Naive thymus-derived CD4-positive, alpha-beta T cell (primary cell): ENCODE measurements at regions of chr7 and their contacts with region 1.

Region 1: GRCh38 chr7:111561885-111562732 is at the start of gene IMMP2L:
- DNase-seq: peak; percentile 80 to 97 (median 90)
- ATAC-seq: peak; percentile 98
- H3K4me3 ChIP-seq: peak within 1 kb of the TSS; percentile 57
- H3K4me3 Mint-ChIP-seq: peak within 1 kb of the TSS; percentile 86 to 94 (median 92)
- H3K27ac ChIP-seq: peak within 1 kb of the TSS; percentile 94
- H3K27ac Mint-ChIP-seq: peak within 1 kb of the TSS; percentile 81 to 98 (median 95)
- H3K4me1 ChIP-seq: peaks cover 13 to 15% of the 10 kb centered on the region in 2 donors
- H3K4me1 Mint-ChIP-seq: peaks cover 25 to 58% (median 46%) of the 10 kb centered on the region in 7 donors
- H3K27me3 ChIP-seq: no peaks in the 10 kb centered on the region
- H3K27me3 Mint-ChIP-seq: peaks cover 2 to 12% (median 5%) of the 10 kb centered on the region in 5 donors
- total RNA-seq, gene IMMP2L: 9.7 to 20.8 (median 16.5) TPM

Region 2: GRCh38 chr7:111012799-111013675 is 549.1 kb before region 1 on chr7:
- CTCF ChIA-PET with region 1: no interaction called
- POLR2A ChIA-PET with region 1: no interaction called
- intact Hi-C with region 1: loop called in 1 of 2 experiments (anchors 10 kb)
- DNase-seq: peak in 8 of 9 donors; percentile 44 to 76 (median 70)
- ATAC-seq: peak; percentile 86
- H3K4me3 ChIP-seq: peak overlapping the region; percentile 50
- H3K4me3 Mint-ChIP-seq: peak overlapping the region in 9 of 10 donors; percentile 59 to 83 (median 76)
- H3K27ac ChIP-seq: peak overlapping the region; percentile 82
- H3K27ac Mint-ChIP-seq: peak overlapping the region in 6 of 9 donors; percentile 84 to 96 (median 90)
- H3K4me1 ChIP-seq: peaks cover 13 to 77% of the 10 kb centered on the region in 2 donors
- H3K4me1 Mint-ChIP-seq: peaks cover 38 to 76% (median 48%) of the 10 kb centered on the region in 7 donors
- H3K27me3 ChIP-seq: no peaks in the 10 kb centered on the region
- H3K27me3 Mint-ChIP-seq: no peaks in the 10 kb centered on the region

Region 3: DNA sequence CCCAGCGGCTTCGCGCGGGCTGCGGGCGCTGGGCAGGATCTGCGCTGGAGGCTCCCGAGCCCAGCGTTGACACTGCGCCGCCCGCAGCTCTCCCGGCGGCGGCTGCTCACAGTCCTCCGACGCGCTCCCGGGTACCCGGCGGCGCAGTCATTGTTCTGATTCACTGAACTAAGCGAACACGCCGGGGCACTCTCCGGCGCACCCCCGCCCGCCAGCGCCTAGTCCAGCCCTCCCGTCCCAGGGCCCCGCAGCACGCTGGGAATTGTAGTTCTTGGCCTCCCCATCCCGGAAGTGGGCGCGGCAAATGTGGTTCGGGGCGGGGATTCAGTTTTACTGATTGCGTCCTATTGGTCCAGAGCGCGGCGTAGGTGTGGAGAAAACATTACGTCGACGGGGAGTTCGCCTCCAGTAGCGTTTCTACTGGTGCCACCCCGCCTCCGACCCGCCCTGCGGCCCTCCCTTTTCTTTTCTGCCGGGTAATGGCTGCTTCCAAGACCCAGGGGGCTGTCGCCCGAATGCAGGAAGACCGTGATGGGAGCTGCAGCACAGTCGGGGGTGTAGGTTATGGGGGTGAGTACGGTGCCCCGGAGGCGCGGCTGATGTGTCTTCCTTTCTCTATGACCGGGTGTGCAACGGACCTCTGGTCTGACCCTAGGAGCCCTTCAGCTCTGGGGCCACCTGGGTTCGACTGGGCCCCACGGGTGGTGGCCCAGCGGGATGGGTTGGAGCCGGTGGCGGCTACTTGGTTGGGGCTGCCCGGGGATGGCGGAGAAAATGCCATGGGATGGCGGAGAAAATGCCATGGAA is 644.3 kb after region 1 on chr7 and contains the starts of genes DOCK4 and ZNF277:
- CTCF ChIA-PET with region 1: no interaction called
- POLR2A ChIA-PET with region 1: no interaction called
- intact Hi-C with region 1: loop called (anchors 1 to 2 kb)
- DNase-seq: peak; percentile 97 to 100 (median 99)
- ATAC-seq: peak; percentile 93
- H3K4me3 ChIP-seq: peak within 1 kb of the TSS; percentile 94
- H3K4me3 Mint-ChIP-seq: peak within 1 kb of the TSS; percentile 93 to 99 (median 96)
- H3K27ac ChIP-seq: peak within 1 kb of the TSS; percentile 71
- H3K27ac Mint-ChIP-seq: peak within 1 kb of the TSS; percentile 60 to 95 (median 85)
- H3K4me1 ChIP-seq: peaks cover 14 to 22% of the 10 kb centered on the region in 2 donors
- H3K4me1 Mint-ChIP-seq: peaks cover 25 to 57% (median 39%) of the 10 kb centered on the region in 7 donors
- H3K27me3 ChIP-seq: peaks cover 15% of the 10 kb centered on the region in 2 donors
- H3K27me3 Mint-ChIP-seq: peaks cover 25 to 36% (median 29%) of the 10 kb centered on the region in 5 donors
- total RNA-seq, gene DOCK4: 0.19 to 3.1 (median 2.4) TPM
- total RNA-seq, gene ZNF277: 19.5 to 38.8 (median 25.9) TPM

Region 4: DNA sequence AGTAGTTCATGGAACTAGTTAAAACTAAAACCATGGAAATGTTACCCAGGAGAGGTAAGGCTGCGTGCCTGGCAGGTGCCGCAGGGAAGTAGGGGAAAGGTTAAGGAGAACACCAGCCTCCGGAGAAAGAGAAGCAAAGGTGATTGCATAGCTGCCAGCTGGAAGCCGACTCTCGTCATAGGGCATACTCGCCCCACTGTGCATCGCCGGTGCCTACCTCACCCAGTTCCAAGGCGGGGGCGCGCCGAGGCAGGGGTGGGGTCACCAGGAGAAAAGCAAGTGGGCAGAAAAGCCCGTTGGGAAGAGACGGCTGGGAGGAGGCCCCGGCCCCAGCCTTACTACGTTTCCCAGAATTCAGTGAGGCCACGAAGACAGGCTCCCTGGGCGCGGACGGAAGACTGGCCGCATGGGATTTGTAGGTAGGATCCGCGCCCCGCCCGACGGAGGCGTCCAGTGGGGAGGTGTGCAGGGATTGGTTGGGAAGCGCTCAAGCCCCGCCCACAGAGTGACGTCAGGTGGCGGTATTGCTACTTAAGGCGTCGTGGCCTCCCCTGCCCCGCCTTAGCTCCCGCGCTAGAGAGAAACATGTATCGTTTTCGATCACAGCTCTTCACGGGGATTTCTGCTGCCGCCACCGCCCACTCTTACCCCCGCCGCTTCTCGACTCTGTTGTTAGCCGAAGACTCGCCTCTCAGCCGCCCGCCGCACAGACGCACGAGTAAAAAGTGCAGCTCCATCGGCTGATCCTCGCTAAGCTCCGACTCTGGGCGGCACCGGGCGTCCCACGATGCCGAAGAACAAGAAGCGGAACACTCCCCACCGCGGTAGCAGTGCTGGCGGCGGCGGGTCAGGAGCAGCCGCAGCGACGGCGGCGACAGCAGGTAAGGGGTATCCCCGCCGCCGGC is 888.0 kb after region 1 on chr7 and contains the start of gene IFRD1:
- CTCF ChIA-PET with region 1: no interaction called
- POLR2A ChIA-PET with region 1: interaction called, 3 read pairs
- intact Hi-C with region 1: loop called (anchors 1 kb)
- DNase-seq: peak; percentile 96 to 100 (median 98)
- ATAC-seq: peak; percentile 92
- H3K4me3 ChIP-seq: peak within 1 kb of the TSS; percentile 99
- H3K4me3 Mint-ChIP-seq: peak within 1 kb of the TSS; percentile 96 to 100 (median 98)
- H3K27ac ChIP-seq: peak within 1 kb of the TSS; percentile 96
- H3K27ac Mint-ChIP-seq: peak within 1 kb of the TSS; percentile 89 to 99 (median 99)
- H3K4me1 ChIP-seq: peaks cover 10 to 14% of the 10 kb centered on the region in 2 donors
- H3K4me1 Mint-ChIP-seq: peaks cover 24 to 54% (median 45%) of the 10 kb centered on the region in 7 donors
- H3K27me3 ChIP-seq: no peaks in the 10 kb centered on the region
- H3K27me3 Mint-ChIP-seq: no peaks in the 10 kb centered on the region
- total RNA-seq, gene IFRD1: 32.2 to 250 (median 63.2) TPM

Region 5: DNA sequence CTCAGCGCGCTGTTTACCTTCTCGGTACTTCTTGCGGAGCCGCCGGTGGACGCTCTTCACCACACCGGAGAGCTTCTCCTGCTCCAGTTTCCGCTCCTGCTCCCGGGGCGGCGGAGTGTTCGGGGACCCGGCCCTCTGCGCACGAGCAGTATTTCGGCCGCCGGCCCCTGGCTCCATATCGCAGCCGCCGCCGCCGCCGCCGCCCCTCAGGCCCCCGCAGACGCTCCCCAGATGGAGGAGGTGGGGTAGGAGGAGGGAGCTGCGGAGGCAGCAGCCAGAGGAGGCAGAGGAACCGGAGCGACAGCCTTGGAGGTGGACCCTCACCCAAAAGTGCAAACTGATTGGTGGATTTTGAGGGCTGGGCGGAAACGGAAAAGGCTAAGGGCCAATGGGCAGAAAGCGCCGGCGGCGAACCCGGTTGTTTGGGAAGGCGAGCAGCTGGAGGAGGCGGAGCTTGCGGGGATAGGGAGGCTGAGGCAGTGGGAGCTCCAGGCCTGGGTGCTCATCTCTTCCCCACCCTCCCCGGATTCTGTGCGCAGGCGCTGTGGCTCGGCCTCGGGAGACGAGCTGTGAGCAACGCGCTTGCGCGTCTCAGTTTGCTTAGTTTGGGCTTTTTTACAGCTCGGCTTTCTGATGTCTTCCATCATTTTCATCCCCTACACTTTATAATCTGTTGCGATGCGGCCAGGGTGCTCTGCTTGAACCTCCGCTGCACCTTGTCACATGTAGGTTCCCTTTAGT is 1377.6 kb after region 1 on chr7:
- CTCF ChIA-PET with region 1: no interaction called
- POLR2A ChIA-PET with region 1: no interaction called
- intact Hi-C with region 1: loop called (anchors 1 to 5 kb)
- DNase-seq: peak; percentile 97 to 100 (median 99)
- ATAC-seq: peak; percentile 98
- H3K4me3 ChIP-seq: peak overlapping the region; percentile 84
- H3K4me3 Mint-ChIP-seq: peak overlapping the region; percentile 88 to 97 (median 95)
- H3K27ac ChIP-seq: peak overlapping the region; percentile 76
- H3K27ac Mint-ChIP-seq: peak overlapping the region; percentile 89 to 97 (median 94)
- H3K4me1 ChIP-seq: peaks cover 19 to 29% of the 10 kb centered on the region in 2 donors
- H3K4me1 Mint-ChIP-seq: peaks cover 22 to 57% (median 52%) of the 10 kb centered on the region in 7 donors
- H3K27me3 ChIP-seq: no peaks in the 10 kb centered on the region
- H3K27me3 Mint-ChIP-seq: peaks cover 0 to 4% (median 0%) of the 10 kb centered on the region in 5 donors